Left ventricle myocardium inferior (tissue), 1 donor: ENCODE measurements at regions of chr2 and their contacts with region 1.

Region 1: GRCh38 chr2:46299365-46300263 is 2.4 kb downstream of the EPAS1 start:
- DNase-seq: peak; percentile 76
- H3K4me3 ChIP-seq: peak overlapping the region; percentile 94
- H3K27ac ChIP-seq: peak overlapping the region; percentile 99
- H3K4me1 ChIP-seq: peaks cover 85% of the 10 kb centered on the region
- H3K27me3 ChIP-seq: no peaks in the 10 kb centered on the region
- CTCF ChIP-seq: no peak

Region 2: GRCh38 chr2:46179037-46179652 is 120.5 kb before region 1 on chr2:
- intact Hi-C with region 1: no loop called
- DNase-seq: peak; percentile 70
- H3K4me3 ChIP-seq: no peak overlapping the region
- H3K27ac ChIP-seq: peak overlapping the region; percentile 84
- H3K4me1 ChIP-seq: peaks cover 29% of the 10 kb centered on the region
- H3K27me3 ChIP-seq: no peaks in the 10 kb centered on the region
- CTCF ChIP-seq: no peak

Region 3: DNA sequence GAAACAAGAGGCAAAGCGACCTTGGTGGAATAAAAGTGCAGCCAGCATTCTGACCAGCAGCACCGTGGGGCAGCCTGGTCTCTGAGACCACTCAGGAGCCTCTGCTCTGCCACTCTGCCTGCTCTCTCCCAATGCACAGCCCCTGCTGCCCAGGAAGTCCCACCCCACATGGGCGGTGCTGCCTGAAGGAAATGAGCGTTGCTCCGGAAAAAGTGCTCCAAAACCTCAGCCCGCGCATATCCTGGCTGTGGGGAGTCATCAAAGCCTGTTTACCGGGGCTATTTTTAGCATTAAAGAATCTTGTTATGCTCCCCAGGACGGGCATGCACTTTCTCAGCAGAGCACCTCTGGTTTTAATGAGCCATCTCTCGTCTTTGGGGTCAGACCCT is 52.1 kb after region 1 on chr2:
- intact Hi-C with region 1: loop called (anchors 5 kb)
- DNase-seq: peak; percentile 58
- H3K4me3 ChIP-seq: peak overlapping the region; percentile 29
- H3K27ac ChIP-seq: peak overlapping the region; percentile 87
- H3K4me1 ChIP-seq: peaks cover 100% of the 10 kb centered on the region
- H3K27me3 ChIP-seq: no peaks in the 10 kb centered on the region
- CTCF ChIP-seq: no peak